MCF 10A (cell line): ENCODE measurements at regions of chr13 and their contacts with region 1.

Region 1: DNA sequence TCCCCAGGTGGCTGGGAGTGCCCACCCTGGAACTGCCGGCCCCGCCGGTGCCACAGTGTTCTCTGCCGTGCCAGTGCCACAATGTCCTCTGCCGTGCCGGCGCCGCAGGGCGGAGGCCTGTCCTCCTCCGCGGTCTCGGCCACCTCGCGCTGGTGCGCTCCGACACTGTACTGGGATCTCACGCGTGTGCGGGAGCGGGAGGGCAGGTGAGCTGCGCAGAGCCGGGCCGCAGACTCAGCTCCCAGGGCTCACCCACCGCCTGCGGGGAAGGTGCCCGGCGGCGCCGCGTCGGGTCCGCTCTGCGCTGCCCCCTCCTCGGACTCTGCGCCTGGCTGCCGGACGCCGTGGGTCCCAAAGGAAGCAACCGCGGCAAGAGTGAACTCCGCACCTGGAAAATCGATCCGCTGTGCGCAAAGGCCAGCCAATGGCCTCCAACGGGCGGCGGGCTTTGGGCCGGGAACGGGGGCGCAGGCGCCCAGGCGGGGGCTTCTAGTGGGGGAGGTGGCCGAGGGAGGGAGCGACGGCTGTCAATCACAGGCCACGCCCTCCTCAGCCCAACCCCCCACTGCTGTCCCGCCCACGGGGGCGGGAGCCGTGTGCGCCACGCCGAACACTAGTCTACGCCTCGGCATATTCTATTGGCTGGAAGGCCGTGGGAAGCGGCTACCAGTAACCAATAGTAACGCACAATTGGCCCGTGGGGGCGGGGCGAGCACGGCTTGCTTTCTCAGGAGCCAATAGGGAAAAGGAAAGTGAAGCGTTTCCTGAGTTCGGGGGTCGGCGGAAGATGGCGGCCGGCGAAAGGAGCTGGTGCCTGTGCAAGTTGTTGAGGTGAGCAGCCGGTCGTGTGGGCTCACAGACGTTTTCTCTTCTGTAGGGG is at the start of gene ALG11:
- DNase-seq: peak; percentile 99
- H3K4me3 Mint-ChIP-seq: peak within 1 kb of the TSS; percentile 92
- H3K27ac Mint-ChIP-seq: peak within 1 kb of the TSS; percentile 90
- H3K4me1 Mint-ChIP-seq: peaks cover 9% of the 10 kb centered on the region
- H3K27me3 Mint-ChIP-seq: no peaks in the 10 kb centered on the region
- CTCF ChIP-seq: no peak
- total RNA-seq, gene ALG11: 33.3 and 39.3 TPM in 2 replicates

Region 2: DNA sequence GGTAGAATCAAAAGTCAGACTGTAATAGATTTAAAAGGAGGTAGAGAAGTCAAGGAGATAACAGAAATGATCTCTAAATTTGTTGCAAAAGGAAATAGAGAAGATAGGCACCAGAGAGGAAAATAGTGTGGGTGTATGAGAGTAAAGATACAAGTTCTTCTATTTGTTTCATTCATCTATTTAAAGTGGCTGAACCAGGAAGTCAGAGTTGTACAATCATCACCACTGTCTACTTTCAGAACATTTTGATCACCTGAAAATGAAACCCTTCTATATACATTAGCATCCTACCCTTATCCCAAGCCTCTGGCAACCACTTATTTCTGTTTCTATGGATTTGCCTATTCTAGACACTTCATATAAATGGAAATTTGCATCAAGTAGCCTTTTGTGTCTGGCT is 595.8 kb before region 1 on chr13:
- CTCF ChIA-PET with region 1: no interaction called
- POLR2A ChIA-PET with region 1: no interaction called
- intact Hi-C with region 1: loop called (anchors 5 kb)
- DNase-seq: no peak
- H3K4me3 Mint-ChIP-seq: no peak overlapping the region
- H3K27ac Mint-ChIP-seq: peak overlapping the region; percentile 64
- H3K4me1 Mint-ChIP-seq: peaks cover 19% of the 10 kb centered on the region
- H3K27me3 Mint-ChIP-seq: no peaks in the 10 kb centered on the region
- CTCF ChIP-seq: no peak

Region 3: GRCh38 chr13:51714663-51715168 is 297.2 kb before region 1 on chr13:
- CTCF ChIA-PET with region 1: no interaction called
- POLR2A ChIA-PET with region 1: no interaction called
- intact Hi-C with region 1: no loop called
- DNase-seq: peak; percentile 62
- H3K4me3 Mint-ChIP-seq: no peak overlapping the region
- H3K27ac Mint-ChIP-seq: peak overlapping the region; percentile 78
- H3K4me1 Mint-ChIP-seq: peaks cover 11% of the 10 kb centered on the region
- H3K27me3 Mint-ChIP-seq: no peaks in the 10 kb centered on the region
- CTCF ChIP-seq: no peak

Region 4: GRCh38 chr13:52001120-52001731 is 10.6 kb before region 1 on chr13:
- CTCF ChIA-PET with region 1: interaction called, 6 read pairs
- POLR2A ChIA-PET with region 1: interaction called, 13 read pairs
- intact Hi-C with region 1: no loop called
- DNase-seq: peak; percentile 51
- H3K4me3 Mint-ChIP-seq: no peak overlapping the region
- H3K27ac Mint-ChIP-seq: no peak overlapping the region
- H3K4me1 Mint-ChIP-seq: peaks cover 27% of the 10 kb centered on the region
- H3K27me3 Mint-ChIP-seq: peaks cover 12% of the 10 kb centered on the region
- CTCF ChIP-seq: peak; percentile 60

Region 5: DNA sequence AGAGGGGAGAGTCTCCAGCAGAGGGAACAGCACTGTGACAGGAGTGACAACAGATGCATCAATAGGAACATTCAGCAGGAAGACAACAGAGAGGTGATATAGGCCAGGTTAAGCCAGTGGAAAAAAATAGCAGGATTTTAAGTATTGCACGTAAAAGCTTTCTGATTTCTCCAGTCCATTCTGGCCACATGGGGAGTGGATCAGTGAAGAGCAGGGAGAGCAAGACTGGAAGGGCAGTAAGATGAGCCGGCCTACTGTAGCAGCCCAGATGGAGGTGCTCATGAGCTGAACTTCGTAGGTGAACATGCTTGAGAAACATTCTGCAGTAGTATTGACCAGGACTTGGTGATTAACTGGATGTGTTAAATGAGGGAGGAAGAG is 14.4 kb after region 1 on chr13:
- CTCF ChIA-PET with region 1: interaction called, 4 read pairs
- POLR2A ChIA-PET with region 1: interaction called, 12 read pairs
- intact Hi-C with region 1: no loop called
- DNase-seq: no peak
- H3K4me3 Mint-ChIP-seq: no peak overlapping the region
- H3K27ac Mint-ChIP-seq: peak overlapping the region; percentile 16
- H3K4me1 Mint-ChIP-seq: peaks cover 32% of the 10 kb centered on the region
- H3K27me3 Mint-ChIP-seq: no peaks in the 10 kb centered on the region
- CTCF ChIP-seq: no peak